ENCODE measurements at regions of chr9 and their contacts with region 1.

Region 1: GRCh38 chr9:7246917-7247522 is 489.2 kb downstream of the KDM4C start:
- DNase-seq: no peak
- ATAC-seq: no peak
- H3K4me3 ChIP-seq: no peak overlapping the region
- H3K27ac ChIP-seq: no peak overlapping the region
- H3K4me1 ChIP-seq: no peaks in the 10 kb centered on the region
- H3K27me3 ChIP-seq: no peaks in the 10 kb centered on the region
- CTCF ChIP-seq: no peak
- POLR2A ChIP-seq: no peak
- RAD21 ChIP-seq: no peak

Region 2: DNA sequence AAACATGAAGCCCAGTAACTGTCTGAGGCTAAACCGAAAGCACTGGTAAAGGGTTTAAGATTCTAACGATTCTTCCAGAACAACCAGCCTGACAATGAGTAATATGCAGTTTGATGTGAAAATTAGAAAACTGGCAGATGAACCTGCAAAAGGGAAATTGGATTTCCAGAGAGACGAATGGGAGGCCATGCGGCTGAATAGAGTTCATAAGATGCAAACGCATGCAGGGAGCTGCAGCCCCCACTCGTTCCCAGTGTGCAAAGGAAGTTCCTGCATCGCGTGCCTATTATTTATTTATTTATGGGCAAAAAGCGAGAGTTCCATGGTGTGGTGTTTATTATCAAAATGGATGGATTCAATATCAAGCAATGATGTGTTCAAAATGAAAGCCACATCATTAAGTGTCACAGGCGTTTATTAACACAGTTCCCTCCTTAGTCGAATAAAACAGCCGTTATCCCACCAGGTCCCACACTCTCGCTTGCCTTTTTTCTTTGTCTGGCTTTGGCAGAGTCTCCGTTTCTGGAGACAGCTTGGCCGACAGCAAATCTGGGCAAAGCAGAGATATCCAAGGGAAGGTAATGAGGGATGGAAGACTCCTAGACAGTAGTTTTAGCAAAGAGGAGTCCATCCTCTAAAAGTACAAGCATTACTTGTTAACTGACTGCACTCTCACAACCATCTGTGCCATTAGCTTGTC is 37.9 kb before region 1 on chr9:
- CTCF ChIA-PET with region 1: no interaction called
- POLR2A ChIA-PET with region 1: no interaction called
- RAD21 ChIA-PET with region 1: no interaction called
- intact Hi-C with region 1: loop called (anchors 2 kb)
- DNase-seq: no peak
- ATAC-seq: no peak
- H3K4me3 ChIP-seq: no peak overlapping the region
- H3K27ac ChIP-seq: no peak overlapping the region
- H3K4me1 ChIP-seq: no peaks in the 10 kb centered on the region
- H3K27me3 ChIP-seq: peaks cover 24% of the 10 kb centered on the region
- CTCF ChIP-seq: no peak
- POLR2A ChIP-seq: no peak
- RAD21 ChIP-seq: no peak